Panc1 (cell line): ENCODE measurements at regions of chr20 and their contacts with region 1.

Region 1: DNA sequence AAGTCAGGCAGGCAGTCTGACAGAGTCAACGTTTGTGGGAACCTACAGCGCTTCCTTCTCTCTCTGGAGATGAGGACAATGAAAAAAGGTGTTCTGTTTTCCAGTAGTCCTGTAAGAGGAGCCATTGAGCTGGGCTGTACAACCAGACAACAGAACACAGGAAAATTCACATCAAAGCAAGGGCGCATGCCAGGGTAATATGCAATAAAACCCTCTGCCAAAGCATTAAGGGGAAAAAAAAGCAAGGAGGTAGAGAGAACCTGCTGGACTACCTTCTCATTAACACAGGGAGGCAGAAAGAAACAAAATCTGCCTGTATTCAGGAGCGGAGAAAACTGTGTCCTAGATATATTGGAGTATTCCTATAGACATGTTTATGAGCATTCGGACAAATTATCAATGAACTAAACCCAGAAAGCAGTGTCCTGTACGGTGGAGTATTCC is 1.3 kb downstream of the RNF24 start:
- DNase-seq: peak; percentile 61
- ATAC-seq: peak; percentile 71
- H3K4me3 ChIP-seq: peak overlapping the region; percentile 62 to 76
- H3K27ac ChIP-seq: no peak overlapping the region
- H3K4me1 ChIP-seq: peaks cover 5% of the 10 kb centered on the region
- H3K27me3 ChIP-seq: no peaks in the 10 kb centered on the region
- CTCF ChIP-seq: peak; percentile 89

Region 2: GRCh38 chr20:3704087-3704486 is 310.0 kb before region 1 on chr20:
- CTCF ChIA-PET with region 1: no interaction called
- POLR2A ChIA-PET with region 1: interaction called, 10 read pairs
- in situ Hi-C with region 1: no loop called
- intact Hi-C with region 1: no loop called
- DNase-seq: no peak
- ATAC-seq: no peak
- H3K4me3 ChIP-seq: no peak overlapping the region
- H3K27ac ChIP-seq: no peak overlapping the region
- H3K4me1 ChIP-seq: peaks cover 4% of the 10 kb centered on the region; the same call in 1 of the 2 replicates
- H3K27me3 ChIP-seq: no peaks in the 10 kb centered on the region
- CTCF ChIP-seq: no peak

Region 3: DNA sequence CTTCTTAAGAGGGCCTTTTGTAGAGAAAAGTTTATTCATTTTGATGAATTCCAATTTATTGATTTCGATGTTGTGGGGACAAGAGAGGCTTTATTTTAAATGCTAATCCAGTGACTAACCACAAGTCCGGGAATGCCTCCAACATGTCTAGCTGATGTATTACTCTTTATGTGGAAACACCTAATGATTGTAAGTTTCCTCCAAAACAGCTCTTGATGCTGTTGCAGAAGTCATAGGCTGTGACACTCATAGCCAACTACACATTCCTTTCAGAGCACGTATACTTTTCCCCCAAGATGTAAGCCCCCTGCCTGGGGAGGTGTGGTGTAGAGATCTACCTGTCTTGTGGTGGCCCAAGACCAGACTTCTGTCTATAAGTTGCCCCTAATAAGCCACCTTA is 62.6 kb after region 1 on chr20:
- CTCF ChIA-PET with region 1: interaction called, 4 read pairs
- POLR2A ChIA-PET with region 1: no interaction called
- in situ Hi-C with region 1: no loop called
- intact Hi-C with region 1: loop called (anchors 2 kb)
- DNase-seq: no peak
- ATAC-seq: peak; percentile 78
- H3K4me3 ChIP-seq: no peak overlapping the region
- H3K27ac ChIP-seq: no peak overlapping the region
- H3K4me1 ChIP-seq: peaks cover 9% of the 10 kb centered on the region
- H3K27me3 ChIP-seq: no peaks in the 10 kb centered on the region
- CTCF ChIP-seq: no peak

Region 4: DNA sequence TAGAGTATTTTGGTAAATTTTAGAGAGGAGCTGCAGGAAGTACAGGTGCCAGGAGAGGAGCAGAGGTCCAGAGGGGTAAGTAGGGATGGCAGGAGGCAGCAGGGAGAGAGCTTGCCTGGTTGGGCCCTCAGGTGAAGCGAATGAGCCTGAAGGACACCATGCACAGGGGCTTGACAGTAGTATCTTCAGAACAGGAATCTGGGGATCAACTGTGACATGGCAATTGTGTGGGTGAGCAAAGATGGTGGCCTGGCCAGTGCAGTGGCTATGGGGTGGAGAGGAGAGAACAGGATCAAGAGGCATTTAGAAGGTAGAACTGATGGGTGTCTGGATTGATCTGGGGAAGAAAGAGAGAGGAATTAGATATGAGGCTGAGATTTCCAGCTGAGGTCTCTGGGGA is 70.0 kb after region 1 on chr20:
- CTCF ChIA-PET with region 1: interaction called, 10 read pairs
- POLR2A ChIA-PET with region 1: no interaction called
- in situ Hi-C with region 1: no loop called
- intact Hi-C with region 1: loop called (anchors 2 kb)
- DNase-seq: no peak
- ATAC-seq: no peak
- H3K4me3 ChIP-seq: no peak overlapping the region
- H3K27ac ChIP-seq: no peak overlapping the region
- H3K4me1 ChIP-seq: peaks cover 8% of the 10 kb centered on the region
- H3K27me3 ChIP-seq: no peaks in the 10 kb centered on the region
- CTCF ChIP-seq: no peak

Region 5: DNA sequence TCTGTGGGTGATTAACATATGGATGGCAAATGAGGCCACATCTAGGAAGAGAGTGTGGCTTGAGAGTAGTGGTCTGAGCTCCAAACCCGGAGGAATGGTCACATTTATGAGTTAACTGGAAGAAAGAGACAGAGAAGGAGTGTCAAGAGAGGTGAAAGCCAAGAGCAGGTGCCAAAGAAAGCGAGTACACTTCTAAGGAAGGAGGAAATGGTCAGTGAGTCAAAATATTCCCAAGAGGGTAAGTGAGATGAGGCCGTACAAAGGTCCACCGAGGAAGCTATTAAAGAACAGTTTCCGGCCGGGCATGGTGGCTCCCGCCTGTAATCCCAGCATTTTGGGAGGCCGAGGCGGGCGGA is 105.8 kb after region 1 on chr20:
- CTCF ChIA-PET with region 1: no interaction called
- POLR2A ChIA-PET with region 1: no interaction called
- in situ Hi-C with region 1: no loop called
- intact Hi-C with region 1: no loop called
- DNase-seq: no peak
- ATAC-seq: no peak
- H3K4me3 ChIP-seq: no peak overlapping the region
- H3K27ac ChIP-seq: no peak overlapping the region
- H3K4me1 ChIP-seq: no peaks in the 10 kb centered on the region
- H3K27me3 ChIP-seq: no peaks in the 10 kb centered on the region
- CTCF ChIP-seq: no peak